ENCODE measurements at regions of chr6 and their contacts with region 1.

Region 1: GRCh38 chr6:10478187-10479040 is 42.7 kb upstream of the GCNT2 start:
- DNase-seq: no peak
- H3K4me3 ChIP-seq: no peak overlapping the region
- H3K27ac ChIP-seq: no peak overlapping the region
- H3K4me1 ChIP-seq: no peaks in the 10 kb centered on the region
- H3K27me3 ChIP-seq: no peaks in the 10 kb centered on the region
- CTCF ChIP-seq: peak in 5 of 6 experiments; percentile 52 to 68 (median 56)
- POLR2A ChIP-seq: no peak

Region 2: DNA sequence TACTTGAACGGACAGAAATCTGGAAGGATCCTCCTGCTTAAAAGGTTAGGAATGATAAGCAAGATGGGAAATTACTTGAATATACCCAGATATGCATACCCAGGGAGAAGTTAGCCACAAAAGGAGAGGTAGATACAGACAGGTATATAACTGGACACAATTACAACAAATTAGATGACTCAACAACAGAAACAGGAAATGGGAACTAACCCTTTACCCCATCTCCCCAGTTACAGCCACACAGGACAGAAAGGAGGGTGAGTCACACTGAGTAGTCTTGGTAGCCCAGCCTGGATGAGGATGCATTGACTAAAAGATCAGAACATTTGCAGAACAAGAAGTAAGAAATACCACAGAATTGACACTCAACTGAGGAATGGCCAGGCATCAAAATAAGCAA is 154.8 kb after region 1 on chr6:
- intact Hi-C with region 1: no loop called
- DNase-seq: no peak
- H3K4me3 ChIP-seq: no peak overlapping the region
- H3K27ac ChIP-seq: no peak overlapping the region
- H3K4me1 ChIP-seq: peaks cover 0 to 5% (median 0%) of the 10 kb centered on the region in 3 donors
- H3K27me3 ChIP-seq: no peaks in the 10 kb centered on the region
- CTCF ChIP-seq: no peak
- POLR2A ChIP-seq: no peak

Region 3: DNA sequence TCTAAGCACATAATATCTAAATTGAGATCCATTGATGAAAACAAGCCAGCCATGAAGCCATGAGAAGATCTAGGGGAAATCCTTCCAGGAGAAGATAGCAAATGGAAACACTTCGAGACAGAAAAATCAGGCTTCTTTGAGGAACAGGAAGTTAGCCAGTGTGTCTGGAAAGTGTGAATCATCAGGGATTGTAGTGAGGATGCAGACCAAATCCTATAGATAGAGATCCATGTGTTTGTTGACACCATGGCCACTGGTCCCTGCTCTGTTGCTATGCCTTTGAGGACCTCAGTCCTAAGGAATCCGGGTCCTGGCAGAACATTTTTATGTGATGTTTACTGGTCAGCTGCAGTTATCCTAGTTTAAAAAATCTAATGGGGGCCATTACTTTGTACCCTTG is 572.3 kb after region 1 on chr6:
- intact Hi-C with region 1: loop called (anchors 10 kb)
- DNase-seq: no peak
- H3K4me3 ChIP-seq: no peak overlapping the region
- H3K27ac ChIP-seq: no peak overlapping the region
- H3K4me1 ChIP-seq: no peaks in the 10 kb centered on the region
- H3K27me3 ChIP-seq: peaks cover 0 to 53% (median 3%) of the 10 kb centered on the region in 4 donors
- CTCF ChIP-seq: no peak
- POLR2A ChIP-seq: no peak

Measured in esophagus squamous epithelium (tissue), 5 donors.